Naive thymus-derived CD8-positive, alpha-beta T cell (primary cell): ENCODE measurements at regions of chr17 and their contacts with region 1.

Region 1: DNA sequence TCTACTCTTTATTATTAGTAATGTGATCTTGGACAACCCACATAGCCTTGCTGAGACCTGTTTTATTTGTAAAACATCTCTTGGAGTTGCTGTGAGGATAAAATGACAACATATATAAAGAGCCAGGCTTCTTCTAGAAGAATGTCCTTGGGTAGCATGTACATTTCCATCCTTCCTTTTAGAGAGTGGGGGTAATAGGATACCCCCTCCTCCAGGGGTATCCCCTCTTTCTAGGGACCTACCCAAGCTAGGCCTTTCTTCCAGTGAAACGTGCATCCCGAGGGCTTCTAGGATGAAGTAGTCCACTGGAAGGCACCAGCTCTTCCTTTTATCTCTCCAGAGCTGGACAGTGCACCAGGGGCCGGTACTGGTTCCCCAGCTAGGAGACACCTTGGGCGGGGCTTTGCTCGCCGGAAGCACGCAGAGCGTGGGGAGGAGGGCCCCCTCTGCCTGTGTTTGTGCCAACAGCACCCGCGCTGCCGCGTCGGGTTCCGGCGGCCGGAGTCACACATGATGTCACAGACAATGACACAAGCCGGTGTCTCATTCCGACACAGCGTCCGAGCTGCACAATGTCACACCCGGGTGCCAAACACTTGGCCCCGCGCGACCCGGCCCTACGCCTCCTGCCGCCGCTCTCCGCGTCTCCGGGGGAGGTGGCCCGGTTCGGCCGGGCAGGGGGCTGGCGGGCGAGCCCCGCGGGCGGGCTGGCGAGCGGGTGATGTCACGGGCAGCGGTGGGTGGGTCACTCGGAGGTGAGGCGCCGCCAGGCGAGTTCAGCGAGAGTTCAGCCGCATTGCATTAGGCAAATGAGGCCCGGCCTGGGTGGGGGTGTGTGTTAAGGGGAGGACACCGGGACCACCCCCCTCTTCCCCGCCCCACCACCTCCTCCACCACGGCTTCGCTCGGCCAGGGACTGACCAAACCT is 23.4 kb downstream of the GJD3 start:
- DNase-seq: peak; percentile 78 to 95 (median 87)
- ATAC-seq: peak; percentile 63 to 81
- H3K4me3 Mint-ChIP-seq: peak overlapping the region; percentile 71 to 89 (median 84)
- H3K27ac Mint-ChIP-seq: peak overlapping the region; percentile 80 to 98 (median 96)
- H3K4me1 Mint-ChIP-seq: peaks cover 49 to 87% (median 81%) of the 10 kb centered on the region in 4 donors
- H3K27me3 Mint-ChIP-seq: no peaks in the 10 kb centered on the region

Region 2: GRCh38 chr17:40309031-40309948 is 31.9 kb before region 1 on chr17 and contains the start of gene RARA:
- POLR2A ChIA-PET with region 1: interaction called, 458 read pairs
- DNase-seq: peak in 4 of 10 donors; percentile 36 to 64 (median 42)
- ATAC-seq: peak; percentile 48 to 51
- H3K4me3 Mint-ChIP-seq: no peak within 1 kb of the TSS
- H3K27ac Mint-ChIP-seq: peak within 1 kb of the TSS in 4 of 10 donors; percentile 12 to 91 (median 76)
- H3K4me1 Mint-ChIP-seq: peaks cover 2 to 27% (median 5%) of the 10 kb centered on the region in 4 donors
- H3K27me3 Mint-ChIP-seq: no peaks in the 10 kb centered on the region
- polyA plus RNA-seq, gene RARA: 7.2 to 12.4 (median 9.0) TPM

Region 3: DNA sequence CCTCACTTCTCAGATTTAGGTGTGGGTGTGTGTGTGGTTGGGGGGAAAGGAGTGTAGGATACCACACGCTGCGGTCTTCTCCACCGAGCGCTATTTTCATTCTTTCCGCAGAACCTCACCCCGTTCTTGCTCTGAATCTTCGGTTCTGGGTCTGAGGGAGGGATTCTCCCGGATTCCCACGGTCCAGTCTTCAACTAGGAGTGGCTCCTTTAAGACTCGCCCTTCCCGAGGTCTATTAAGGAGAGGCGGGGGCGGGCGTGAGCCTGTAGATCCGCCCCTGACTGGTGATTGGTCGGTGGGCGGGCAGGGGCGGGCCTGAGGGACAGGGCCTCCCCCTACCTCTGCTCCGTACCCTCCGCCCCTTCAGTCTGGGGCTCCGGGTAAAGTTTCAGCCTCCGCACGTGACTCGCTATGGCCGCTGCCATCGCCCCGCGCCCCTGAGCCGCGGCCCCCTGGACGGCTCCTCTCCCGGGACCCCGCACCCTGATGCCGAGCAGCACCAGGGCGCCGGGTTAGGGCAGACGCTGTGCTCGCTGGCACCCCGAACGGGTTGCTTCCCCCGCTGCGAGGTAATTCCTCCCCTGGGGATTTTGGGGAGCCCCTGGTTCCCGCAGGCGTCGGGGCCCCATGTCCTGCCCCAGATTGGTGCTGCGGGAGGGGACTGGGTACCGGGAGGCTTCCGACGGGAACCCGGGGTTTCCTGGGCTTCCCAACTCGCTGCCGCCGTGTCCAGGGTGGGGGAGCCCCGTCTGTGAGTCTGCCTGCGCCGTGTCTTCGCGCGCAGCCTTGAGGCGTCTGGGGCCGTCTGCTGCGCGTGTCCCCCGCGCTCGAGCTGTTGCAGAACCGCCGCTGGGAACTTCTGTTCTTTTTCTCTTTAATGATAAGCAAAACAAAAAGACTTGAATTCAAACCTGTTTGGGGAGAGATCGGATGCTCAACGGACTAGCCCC is 23.0 kb before region 1 on chr17:
- POLR2A ChIA-PET with region 1: interaction called, 458 read pairs
- DNase-seq: peak; percentile 85 to 94 (median 89)
- ATAC-seq: peak; percentile 53 to 64
- H3K4me3 Mint-ChIP-seq: peak overlapping the region; percentile 83 to 97 (median 96)
- H3K27ac Mint-ChIP-seq: peak overlapping the region; percentile 98 to 100 (median 100)
- H3K4me1 Mint-ChIP-seq: peaks cover 52 to 79% (median 65%) of the 10 kb centered on the region in 4 donors
- H3K27me3 Mint-ChIP-seq: peaks cover 0 to 6% (median 0%) of the 10 kb centered on the region in 5 donors